ENCODE measurements at regions of chr2 and their contacts with region 1.

Region 1: GRCh38 chr2:28958689-28959088 is 22.4 kb upstream of the TOGARAM2 start:
- DNase-seq: peak; percentile 93
- ATAC-seq: peak; percentile 82
- H3K4me3 ChIP-seq: no peak overlapping the region
- H3K27ac ChIP-seq: no peak overlapping the region
- H3K4me1 ChIP-seq: peaks cover 7% of the 10 kb centered on the region; the same call in 1 of the 2 replicates
- H3K27me3 ChIP-seq: no peaks in the 10 kb centered on the region
- CTCF ChIP-seq: peak; percentile 78

Region 2: GRCh38 chr2:28991021-28991420 is 32.3 kb after region 1 on chr2:
- CTCF ChIA-PET with region 1: no interaction called
- POLR2A ChIA-PET with region 1: no interaction called
- intact Hi-C with region 1: no loop called
- DNase-seq: no peak
- ATAC-seq: no peak
- H3K4me3 ChIP-seq: no peak overlapping the region
- H3K27ac ChIP-seq: no peak overlapping the region
- H3K4me1 ChIP-seq: peaks cover 9% of the 10 kb centered on the region
- H3K27me3 ChIP-seq: no peaks in the 10 kb centered on the region
- CTCF ChIP-seq: no peak

Region 3: GRCh38 chr2:29014811-29015421 is 56.2 kb after region 1 on chr2:
- CTCF ChIA-PET with region 1: no interaction called
- POLR2A ChIA-PET with region 1: no interaction called
- intact Hi-C with region 1: loop called (anchors 1 kb)
- DNase-seq: peak; percentile 72
- ATAC-seq: peak; percentile 89
- H3K4me3 ChIP-seq: no peak overlapping the region
- H3K27ac ChIP-seq: peak overlapping the region; percentile 23; the same call in 1 of the 2 replicates
- H3K4me1 ChIP-seq: peaks cover 15% of the 10 kb centered on the region
- H3K27me3 ChIP-seq: no peaks in the 10 kb centered on the region
- CTCF ChIP-seq: peak; percentile 46

Region 4: GRCh38 chr2:29196792-29197788 is 238.4 kb after region 1 on chr2:
- CTCF ChIA-PET with region 1: no interaction called
- POLR2A ChIA-PET with region 1: no interaction called
- intact Hi-C with region 1: loop called (anchors 1 kb)
- DNase-seq: peak; percentile 86
- ATAC-seq: peak; percentile 96
- H3K4me3 ChIP-seq: no peak overlapping the region
- H3K27ac ChIP-seq: no peak overlapping the region
- H3K4me1 ChIP-seq: peaks cover 8% of the 10 kb centered on the region; the same call in 1 of the 2 replicates
- H3K27me3 ChIP-seq: no peaks in the 10 kb centered on the region
- CTCF ChIP-seq: peak; percentile 96

Region 5: GRCh38 chr2:29923110-29923721 is 964.5 kb after region 1 on chr2:
- CTCF ChIA-PET with region 1: no interaction called
- POLR2A ChIA-PET with region 1: no interaction called
- intact Hi-C with region 1: loop called (anchors 2 kb)
- DNase-seq: peak; percentile 81
- ATAC-seq: no peak
- H3K4me3 ChIP-seq: no peak overlapping the region
- H3K27ac ChIP-seq: no peak overlapping the region
- H3K4me1 ChIP-seq: peaks cover 13% of the 10 kb centered on the region; the same call in 1 of the 2 replicates
- H3K27me3 ChIP-seq: peaks cover 11% of the 10 kb centered on the region; the same call in 1 of the 2 replicates
- CTCF ChIP-seq: peak; percentile 94

Region 6: DNA sequence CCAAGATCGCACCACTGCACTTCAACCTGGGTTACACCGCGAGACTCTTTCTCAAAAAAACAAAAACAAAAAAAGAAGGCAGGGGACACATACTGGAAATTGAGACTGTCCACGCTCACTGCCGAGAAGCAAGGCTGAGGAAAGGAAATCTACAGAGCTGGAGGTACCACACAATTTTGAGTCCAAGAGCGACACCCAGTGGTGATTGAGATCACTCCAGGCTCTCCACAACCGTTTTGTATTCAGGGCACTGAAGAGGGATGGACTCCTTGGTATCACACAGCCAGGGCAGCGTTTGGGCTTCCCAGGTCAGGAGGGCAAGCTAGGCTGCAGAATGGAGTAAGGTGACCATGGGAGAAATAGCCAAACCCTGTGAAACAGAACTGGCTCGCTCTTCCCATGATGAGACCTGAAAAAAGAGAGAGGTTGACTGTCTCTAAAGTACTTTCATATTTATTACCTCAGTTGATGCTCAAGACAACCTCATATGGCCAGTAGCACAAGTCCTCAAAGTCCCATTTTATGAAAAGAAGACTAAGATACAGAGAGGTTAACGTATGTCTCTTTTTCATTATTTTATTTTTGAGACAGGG is 1113.7 kb after region 1 on chr2:
- CTCF ChIA-PET with region 1: no interaction called
- POLR2A ChIA-PET with region 1: no interaction called
- intact Hi-C with region 1: loop called (anchors 5 kb)
- DNase-seq: peak; percentile 91
- ATAC-seq: peak; percentile 98
- H3K4me3 ChIP-seq: no peak overlapping the region
- H3K27ac ChIP-seq: no peak overlapping the region
- H3K4me1 ChIP-seq: peaks cover 11% of the 10 kb centered on the region; the same call in 1 of the 2 replicates
- H3K27me3 ChIP-seq: 0 out of 2 replicates have a peak, but pooled peaks cover 7% of the 10 kb centered on the region
- CTCF ChIP-seq: peak; percentile 84